PC-3 (cell line): ENCODE measurements at regions of chr7 and their contacts with region 1.

Region 1: GRCh38 chr7:48424731-48425130 is 253.5 kb downstream of the ABCA13 start:
- DNase-seq: peak; percentile 75
- ATAC-seq: no peak
- H3K4me3 ChIP-seq: no peak overlapping the region
- H3K27ac ChIP-seq: no peak overlapping the region
- H3K4me1 ChIP-seq: peaks cover 58% of the 10 kb centered on the region
- H3K27me3 ChIP-seq: no peaks in the 10 kb centered on the region
- CTCF ChIP-seq: peak; percentile 92

Region 2: DNA sequence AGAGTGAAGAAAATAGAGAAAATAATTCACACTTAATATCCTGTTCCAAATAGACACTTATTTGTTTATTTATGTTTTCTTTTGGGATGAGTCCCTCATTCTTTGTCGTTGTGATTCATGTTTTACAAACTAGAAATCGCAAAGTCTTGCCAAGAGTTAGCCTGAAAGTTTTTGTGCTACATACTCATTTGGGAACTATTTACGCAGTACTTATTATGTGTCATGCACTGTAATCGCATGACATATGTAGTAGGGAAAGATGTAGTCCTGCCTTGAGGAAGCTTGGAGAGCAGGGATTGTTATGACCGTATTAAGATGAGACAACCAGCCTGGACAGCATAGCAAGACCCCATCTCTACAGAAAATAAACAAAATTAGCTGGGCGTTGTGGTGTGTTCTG is 64.2 kb before region 1 on chr7:
- CTCF ChIA-PET with region 1: no interaction called
- POLR2A ChIA-PET with region 1: no interaction called
- intact Hi-C with region 1: loop called (anchors 1 kb)
- DNase-seq: peak; percentile 82
- ATAC-seq: peak; percentile 62
- H3K4me3 ChIP-seq: no peak overlapping the region
- H3K27ac ChIP-seq: peak overlapping the region; percentile 43
- H3K4me1 ChIP-seq: peaks cover 30% of the 10 kb centered on the region
- H3K27me3 ChIP-seq: no peaks in the 10 kb centered on the region
- CTCF ChIP-seq: no peak

Region 3: DNA sequence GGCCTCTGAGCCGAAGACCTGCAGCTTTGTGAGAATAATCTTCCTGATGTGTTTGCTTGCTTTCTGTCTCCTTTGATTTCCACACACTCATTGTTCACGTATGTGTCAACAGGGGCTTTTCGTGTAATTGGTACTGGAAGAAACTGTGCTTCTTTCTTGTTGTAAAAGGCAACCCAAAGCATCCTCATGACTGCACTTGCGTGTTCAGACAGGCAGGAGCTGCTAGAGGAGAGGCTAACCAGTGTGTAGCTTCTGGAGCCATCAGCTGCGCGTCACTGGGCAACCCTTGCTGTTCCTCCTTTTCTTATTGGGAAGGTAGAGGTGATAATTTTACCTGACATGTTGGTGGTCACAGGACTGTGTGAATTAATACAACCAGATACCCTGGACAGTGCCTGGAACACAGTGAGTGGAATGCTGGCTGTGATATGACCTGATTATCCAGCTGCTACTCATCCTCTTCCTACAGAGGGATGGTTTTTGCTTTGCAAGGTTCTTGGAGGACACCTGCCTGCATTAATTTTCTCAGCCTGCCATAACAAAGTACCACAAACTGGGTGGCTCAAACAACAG is 40.5 kb before region 1 on chr7:
- CTCF ChIA-PET with region 1: no interaction called
- POLR2A ChIA-PET with region 1: no interaction called
- intact Hi-C with region 1: no loop called
- DNase-seq: no peak
- ATAC-seq: no peak
- H3K4me3 ChIP-seq: no peak overlapping the region
- H3K27ac ChIP-seq: no peak overlapping the region
- H3K4me1 ChIP-seq: peaks cover 5% of the 10 kb centered on the region
- H3K27me3 ChIP-seq: no peaks in the 10 kb centered on the region
- CTCF ChIP-seq: no peak

Region 4: GRCh38 chr7:48481235-48481634 is 56.5 kb after region 1 on chr7:
- CTCF ChIA-PET with region 1: no interaction called
- POLR2A ChIA-PET with region 1: no interaction called
- intact Hi-C with region 1: loop called (anchors 1 kb)
- DNase-seq: peak; percentile 56
- ATAC-seq: peak; percentile 85
- H3K4me3 ChIP-seq: no peak overlapping the region
- H3K27ac ChIP-seq: no peak overlapping the region
- H3K4me1 ChIP-seq: peaks cover 7% of the 10 kb centered on the region; the same call in 1 of the 2 replicates
- H3K27me3 ChIP-seq: no peaks in the 10 kb centered on the region
- CTCF ChIP-seq: no peak

Region 5: GRCh38 chr7:48718731-48719387 is 294.1 kb after region 1 on chr7:
- CTCF ChIA-PET with region 1: no interaction called
- POLR2A ChIA-PET with region 1: no interaction called
- intact Hi-C with region 1: loop called (anchors 5 kb)
- DNase-seq: peak; percentile 65
- ATAC-seq: peak; percentile 86
- H3K4me3 ChIP-seq: no peak overlapping the region
- H3K27ac ChIP-seq: peak overlapping the region; percentile 66
- H3K4me1 ChIP-seq: peaks cover 6% of the 10 kb centered on the region; the same call in 1 of the 2 replicates
- H3K27me3 ChIP-seq: no peaks in the 10 kb centered on the region
- CTCF ChIP-seq: no peak

Region 6: GRCh38 chr7:49166441-49166840 is 741.7 kb after region 1 on chr7:
- CTCF ChIA-PET with region 1: no interaction called
- POLR2A ChIA-PET with region 1: no interaction called
- intact Hi-C with region 1: loop called (anchors 2 kb)
- DNase-seq: peak; percentile 45
- ATAC-seq: peak; percentile 57
- H3K4me3 ChIP-seq: no peak overlapping the region
- H3K27ac ChIP-seq: no peak overlapping the region
- H3K4me1 ChIP-seq: no peaks in the 10 kb centered on the region
- H3K27me3 ChIP-seq: peaks cover 11% of the 10 kb centered on the region; the same call in 1 of the 2 replicates
- CTCF ChIP-seq: peak; percentile 58